HEK293 (cell line): ENCODE measurements at regions of chr17 and their contacts with region 1.

Region 1: DNA sequence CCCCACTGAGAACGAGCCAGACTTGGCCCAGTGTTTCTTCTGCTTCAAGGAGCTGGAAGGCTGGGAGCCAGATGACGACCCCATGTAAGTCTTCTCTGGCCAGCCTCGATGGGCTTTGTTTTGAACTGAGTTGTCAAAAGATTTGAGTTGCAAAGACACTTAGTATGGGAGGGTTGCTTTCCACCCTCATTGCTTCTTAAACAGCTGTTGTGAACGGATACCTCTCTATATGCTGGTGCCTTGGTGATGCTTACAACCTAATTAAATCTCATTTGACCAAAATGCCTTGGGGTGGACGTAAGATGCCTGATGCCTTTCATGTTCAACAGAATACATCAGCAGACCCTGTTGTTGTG is 631 bp downstream of the BIRC5 start:
- H3K4me3 ChIP-seq: peak overlapping the region; percentile 94
- H3K27ac ChIP-seq: peak overlapping the region; percentile 91
- H3K4me1 ChIP-seq: peaks cover 11% of the 10 kb centered on the region
- CTCF ChIP-seq: no peak

Region 2: GRCh38 chr17:78200451-78200850 is 14.2 kb before region 1 on chr17:
- CTCF ChIA-PET with region 1: no interaction called
- POLR2A ChIA-PET with region 1: no interaction called
- H3K4me3 ChIP-seq: no peak overlapping the region
- H3K27ac ChIP-seq: no peak overlapping the region
- H3K4me1 ChIP-seq: no peaks in the 10 kb centered on the region
- CTCF ChIP-seq: no peak

Region 3: DNA sequence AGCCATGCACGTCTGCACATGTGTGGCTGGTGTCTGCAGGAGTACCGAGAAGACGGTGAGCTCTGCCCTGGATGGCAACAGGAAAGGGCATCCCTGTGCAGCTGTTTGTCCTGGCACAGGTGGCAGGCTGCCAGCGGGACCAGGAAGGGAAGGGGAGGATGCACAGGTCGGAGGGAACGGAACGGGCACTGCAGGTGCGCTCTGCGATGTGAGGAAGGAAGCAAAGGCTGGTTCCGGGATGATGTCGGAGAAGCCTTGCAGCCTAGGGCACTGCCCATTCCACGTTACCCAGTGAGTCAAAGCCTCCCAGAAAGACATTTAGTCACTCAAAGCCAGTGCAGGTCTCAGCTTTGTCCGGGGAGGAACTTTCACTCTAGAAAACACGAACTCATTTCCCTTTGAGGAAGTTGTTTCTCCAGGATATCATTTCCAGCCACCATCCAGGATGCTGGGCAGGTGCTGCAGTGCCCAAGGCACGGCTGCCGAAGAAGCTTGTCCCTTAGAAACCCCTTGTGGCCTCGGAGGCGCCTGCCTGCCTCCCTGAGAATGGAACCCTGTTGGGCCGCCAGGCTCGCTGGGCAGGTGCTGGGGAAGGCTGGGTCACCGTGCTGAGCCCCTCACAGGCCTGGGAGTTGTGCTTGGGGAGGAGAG is 12.2 kb after region 1 on chr17:
- CTCF ChIA-PET with region 1: no interaction called
- POLR2A ChIA-PET with region 1: interaction called, 15 read pairs
- H3K4me3 ChIP-seq: no peak overlapping the region
- H3K27ac ChIP-seq: no peak overlapping the region
- H3K4me1 ChIP-seq: no peaks in the 10 kb centered on the region
- CTCF ChIP-seq: no peak

Region 4: GRCh38 chr17:78278139-78279127 is 63.7 kb after region 1 on chr17:
- CTCF ChIA-PET with region 1: no interaction called
- POLR2A ChIA-PET with region 1: no interaction called
- H3K4me3 ChIP-seq: no peak overlapping the region
- H3K27ac ChIP-seq: no peak overlapping the region
- H3K4me1 ChIP-seq: no peaks in the 10 kb centered on the region
- CTCF ChIP-seq: no peak